ENCODE measurements at regions of chr11 and their contacts with region 1.

Region 1: GRCh38 chr11:830295-831117 is 2.2 kb upstream of the CD151 start:
- DNase-seq: no peak
- H3K4me3 ChIP-seq: peak overlapping the region; percentile 45 to 74 (median 56)
- H3K27ac ChIP-seq: no peak overlapping the region
- H3K4me1 ChIP-seq: peaks cover 0 to 54% (median 47%) of the 10 kb centered on the region in 4 experiments; a peak in 6 of 7 replicates
- H3K27me3 ChIP-seq: peaks cover 6 to 41% (median 31%) of the 10 kb centered on the region in 4 experiments
- CTCF ChIP-seq: peak in 1 of 3 experiments; percentile 12; a peak in 1 of 4 replicates
- EP300 ChIP-seq: no peak
- POLR2A ChIP-seq: no peak
- RAD21 ChIP-seq: no peak

Region 2: GRCh38 chr11:695538-696248 is 134.8 kb before region 1 on chr11 and contains the start of gene TMEM80:
- CTCF ChIA-PET with region 1: no interaction called
- POLR2A ChIA-PET with region 1: no interaction called
- DNase-seq: peak; percentile 91 to 99
- H3K4me3 ChIP-seq: peak within 1 kb of the TSS; percentile 62 to 92 (median 77)
- H3K27ac ChIP-seq: peak within 1 kb of the TSS; percentile 97
- H3K4me1 ChIP-seq: peaks cover 0 to 28% (median 11%) of the 10 kb centered on the region in 4 experiments; a peak in 6 of 7 replicates
- H3K27me3 ChIP-seq: no peaks in the 10 kb centered on the region
- CTCF ChIP-seq: 0 out of 4 replicates have a peak, but pooled peaks of 1 of the 3 experiments have one; percentile 0
- EP300 ChIP-seq: no peak
- POLR2A ChIP-seq: peak in 1 of 2 experiments; percentile 59; a peak in 1 of 3 replicates
- RAD21 ChIP-seq: no peak
- total RNA-seq, gene TMEM80: 7.3 and 8.0 TPM in 2 replicates

Region 3: GRCh38 chr11:819129-819931 is 11.2 kb before region 1 on chr11:
- CTCF ChIA-PET with region 1: interaction called, 10 read pairs
- POLR2A ChIA-PET with region 1: interaction called, 1,917 read pairs
- DNase-seq: peak in 1 of 2 experiments; percentile 95
- H3K4me3 ChIP-seq: peak overlapping the region; percentile 77 to 92 (median 80)
- H3K27ac ChIP-seq: peak overlapping the region; percentile 64; the same call in 1 of the 2 replicates
- H3K4me1 ChIP-seq: peaks cover 0 to 12% (median 9%) of the 10 kb centered on the region in 4 experiments; a peak in 5 of 7 replicates
- H3K27me3 ChIP-seq: no peaks in the 10 kb centered on the region; a peak in 2 of 7 replicates
- CTCF ChIP-seq: no peak
- EP300 ChIP-seq: no peak
- POLR2A ChIP-seq: peak in 1 of 2 experiments; percentile 82; a peak in 2 of 3 replicates
- RAD21 ChIP-seq: no peak

Region 4: DNA sequence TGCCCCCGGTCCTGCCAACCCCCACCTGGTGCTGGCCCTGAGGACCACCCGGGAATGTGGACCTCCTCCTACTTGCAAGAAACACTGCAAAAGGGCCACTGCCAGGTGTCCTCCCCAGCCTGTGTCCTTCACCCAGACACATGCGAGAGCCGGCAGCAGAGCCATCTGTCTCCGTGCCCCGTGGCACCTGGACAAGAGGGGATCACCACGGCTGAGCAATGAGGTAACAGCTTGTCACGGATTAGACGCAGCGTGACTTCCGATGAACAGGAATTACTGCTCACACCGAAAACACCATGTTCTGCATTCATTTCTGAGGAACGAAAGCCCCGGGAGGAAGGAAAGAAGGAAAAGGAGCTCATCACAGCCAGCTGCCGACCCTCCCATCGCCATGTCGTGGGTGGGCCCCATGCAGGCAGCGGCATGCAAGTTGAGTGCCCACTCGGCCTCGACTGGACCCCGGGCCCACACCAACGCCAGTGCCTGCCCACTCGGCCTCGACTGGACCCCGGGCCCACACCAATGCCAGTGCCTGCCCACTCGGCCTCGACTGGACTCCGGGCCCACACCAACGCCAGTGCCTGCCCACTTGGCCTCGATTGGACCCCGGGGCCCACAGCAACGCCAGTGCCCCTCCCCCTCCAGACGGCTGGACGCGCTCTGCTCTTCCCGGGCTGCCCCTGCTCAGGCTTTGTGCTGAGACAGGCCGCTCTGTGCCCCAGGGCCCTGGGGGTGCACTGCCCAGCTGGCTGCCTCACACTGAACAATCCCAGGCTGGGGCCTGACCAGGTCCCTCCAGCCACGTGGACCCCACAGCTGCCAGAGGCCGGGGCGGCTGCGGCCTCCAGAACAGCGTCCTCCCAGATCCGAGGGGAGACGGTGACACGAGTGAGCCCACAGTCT is 58.1 kb after region 1 on chr11:
- CTCF ChIA-PET with region 1: no interaction called
- POLR2A ChIA-PET with region 1: no interaction called
- DNase-seq: no peak
- H3K4me3 ChIP-seq: no peak overlapping the region
- H3K27ac ChIP-seq: no peak overlapping the region
- H3K4me1 ChIP-seq: peaks cover 0 to 5% (median 3%) of the 10 kb centered on the region in 4 experiments; a peak in 2 of 7 replicates
- H3K27me3 ChIP-seq: no peaks in the 10 kb centered on the region
- CTCF ChIP-seq: no peak
- EP300 ChIP-seq: no peak
- POLR2A ChIP-seq: no peak
- RAD21 ChIP-seq: no peak